ENCODE measurements at regions of chr12 and their contacts with region 1.

Region 1: DNA sequence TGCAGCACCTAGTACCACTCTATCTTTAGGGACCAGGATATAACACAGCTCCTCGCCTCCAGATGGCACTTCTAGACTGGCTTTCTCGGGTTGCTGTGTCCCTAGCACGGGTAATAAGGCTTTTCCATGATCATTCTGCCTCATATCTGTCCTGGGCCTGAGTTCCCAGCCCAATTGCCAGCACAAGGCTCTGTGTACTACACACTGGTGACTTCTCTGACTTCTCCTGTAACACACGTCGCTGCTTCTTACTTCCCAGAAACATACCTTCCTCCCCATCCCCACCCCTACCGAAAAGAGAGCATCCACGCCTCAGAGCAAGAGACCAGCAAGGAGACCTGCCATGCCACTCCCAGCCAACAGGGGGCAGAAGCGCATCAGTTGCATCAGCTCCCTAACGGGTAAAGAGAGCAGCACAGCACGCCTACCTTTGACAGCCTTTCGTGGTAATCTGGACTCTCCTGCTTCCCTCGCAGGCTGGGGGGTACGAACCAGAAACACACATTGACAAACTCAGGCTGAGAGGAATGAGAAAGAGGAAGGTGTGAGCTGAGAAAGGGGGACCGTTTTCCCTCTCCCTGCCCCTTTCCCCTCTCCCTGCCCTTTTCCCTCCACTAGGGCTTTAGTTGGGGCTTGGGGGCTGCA is 21.2 kb upstream of the ZNF740 start:
- DNase-seq: peak; percentile 94
- CTCF ChIP-seq: peak; percentile 100

Region 2: DNA sequence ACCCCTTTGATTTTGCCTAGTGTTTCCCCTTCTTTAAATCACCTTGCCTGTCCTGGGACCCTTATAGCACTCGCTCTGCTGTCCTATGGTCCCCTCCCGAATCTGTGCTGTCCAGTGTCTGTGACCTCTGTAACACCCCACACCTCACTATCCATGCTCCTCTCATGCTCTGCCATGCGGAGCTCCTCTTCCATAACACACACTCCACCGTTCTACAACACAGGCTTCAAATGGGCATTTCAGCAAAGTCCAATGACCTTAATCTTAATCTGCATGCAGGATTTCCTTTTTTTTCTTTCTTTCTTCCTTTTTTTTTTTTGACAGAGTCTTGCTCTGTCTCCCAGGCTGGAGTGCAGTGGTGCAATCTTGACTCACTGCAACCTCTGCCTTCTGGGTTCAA is 30.1 kb before region 1 on chr12:
- CTCF ChIA-PET with region 1: interaction called, 17 read pairs
- POLR2A ChIA-PET with region 1: no interaction called
- DNase-seq: no peak
- CTCF ChIP-seq: no peak

Region 3: GRCh38 chr12:53180220-53180930 is 21.1 kb after region 1 on chr12 and contains the starts of genes CSAD and ZNF740:
- CTCF ChIA-PET with region 1: interaction called, 147 read pairs
- POLR2A ChIA-PET with region 1: no interaction called
- DNase-seq: peak; percentile 99
- CTCF ChIP-seq: no peak

Region 4: DNA sequence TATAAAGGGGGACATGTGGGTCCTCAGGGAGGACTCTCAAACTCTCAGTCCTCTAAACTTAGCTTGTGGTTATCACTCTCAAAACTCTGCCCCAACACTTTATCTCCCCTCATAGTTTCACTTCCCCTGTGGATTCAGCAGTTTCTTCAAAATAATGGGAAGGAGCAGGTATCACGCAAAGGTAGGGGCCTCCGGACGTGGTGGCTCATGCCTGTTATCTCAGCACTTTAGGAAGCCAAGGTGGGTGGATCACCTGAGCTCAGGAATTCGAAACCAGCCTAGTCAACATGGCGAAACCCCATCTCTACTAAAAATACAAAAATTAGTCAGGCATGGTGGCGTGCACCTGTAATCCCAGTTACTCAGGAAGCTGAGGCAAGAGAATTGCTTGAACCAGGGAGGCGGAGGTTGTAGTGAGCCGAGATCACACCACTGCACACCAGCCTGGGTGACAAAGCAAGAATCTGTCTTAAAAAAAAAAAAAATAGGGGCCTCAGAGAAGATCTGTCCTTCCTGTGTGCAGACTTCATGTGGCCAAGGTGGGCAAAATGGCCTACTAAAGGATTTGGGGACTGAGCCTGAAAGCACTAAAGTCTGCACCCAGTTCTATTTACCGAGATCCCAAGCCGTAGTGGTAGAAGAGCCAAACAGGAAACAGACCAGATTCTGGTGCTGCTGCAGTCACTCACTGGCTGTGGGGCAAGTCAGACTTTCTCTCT is 41.3 kb after region 1 on chr12:
- CTCF ChIA-PET with region 1: interaction called, 35 read pairs
- POLR2A ChIA-PET with region 1: no interaction called
- DNase-seq: peak; percentile 52
- CTCF ChIP-seq: no peak

Region 5: DNA sequence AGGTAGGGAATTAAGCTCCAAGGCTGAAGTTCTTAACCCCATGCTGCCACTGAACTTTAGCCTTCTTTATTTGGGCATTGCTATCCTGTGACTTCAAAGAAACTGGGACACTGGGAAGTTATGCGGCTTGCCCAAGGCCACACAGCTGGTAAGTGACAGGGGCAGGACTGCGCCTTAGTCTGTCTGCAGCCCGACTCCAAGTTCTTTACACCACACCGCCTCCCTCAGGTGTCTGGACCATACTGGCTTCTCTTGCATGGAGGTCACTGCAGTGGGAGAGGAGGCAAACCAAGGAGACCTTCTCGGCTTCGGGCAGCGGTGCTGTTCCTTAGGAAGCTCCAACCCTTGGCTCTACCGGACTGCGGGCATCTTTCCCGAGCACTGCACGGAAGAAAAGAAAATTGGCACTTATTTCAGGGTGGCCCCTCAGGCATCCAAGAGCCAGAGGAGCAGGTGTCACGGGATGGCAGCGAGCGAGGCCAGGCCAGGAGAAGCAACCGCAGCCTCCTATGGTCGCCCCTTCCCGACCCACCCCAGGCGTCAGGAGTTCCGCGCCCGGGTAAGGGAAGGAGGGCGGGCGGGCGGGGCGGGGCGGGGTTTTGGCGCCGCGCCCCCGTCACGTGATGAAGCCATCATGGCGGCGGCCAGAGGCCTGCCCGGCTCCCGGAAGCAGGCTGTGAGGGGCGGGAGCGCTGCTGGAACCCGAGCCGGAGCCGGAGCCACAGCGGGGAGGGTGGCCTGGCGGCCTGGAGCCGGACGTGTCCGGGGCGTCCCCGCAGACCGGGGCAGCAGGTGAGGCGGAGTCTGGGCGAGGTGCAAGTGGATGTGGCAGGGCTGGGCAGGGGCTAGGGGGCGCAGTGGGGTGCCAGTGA is 92.4 kb after region 1 on chr12:
- CTCF ChIA-PET with region 1: interaction called, 10 read pairs
- POLR2A ChIA-PET with region 1: no interaction called
- DNase-seq: peak; percentile 93
- CTCF ChIP-seq: peak; percentile 67

Region 6: DNA sequence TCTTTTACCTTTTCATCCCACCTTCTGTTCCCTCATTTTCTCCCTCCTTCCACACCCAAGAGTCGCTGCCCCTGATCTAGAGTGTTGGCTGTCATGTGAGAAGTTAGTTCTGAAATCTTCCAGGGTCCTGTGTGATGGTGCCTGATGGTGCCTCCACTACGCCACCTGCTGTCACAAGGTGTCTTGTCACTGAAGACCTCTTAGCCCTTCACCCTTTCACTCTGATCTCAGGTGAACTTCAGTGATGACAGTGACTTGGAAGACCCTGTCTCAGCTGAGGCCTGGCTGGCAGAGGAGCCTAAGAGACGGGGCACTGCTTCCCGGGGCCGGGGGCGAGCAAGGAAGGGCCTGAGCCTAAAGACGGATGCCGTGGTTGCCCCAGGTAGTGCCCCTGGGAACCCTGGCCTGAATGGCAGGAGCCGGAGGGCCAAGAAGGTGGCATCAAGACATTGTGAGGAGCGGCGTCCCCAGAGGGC is 128.5 kb after region 1 on chr12:
- CTCF ChIA-PET with region 1: interaction called, 59 read pairs
- POLR2A ChIA-PET with region 1: no interaction called
- DNase-seq: peak; percentile 80
- CTCF ChIP-seq: peak; percentile 68

Region 7: DNA sequence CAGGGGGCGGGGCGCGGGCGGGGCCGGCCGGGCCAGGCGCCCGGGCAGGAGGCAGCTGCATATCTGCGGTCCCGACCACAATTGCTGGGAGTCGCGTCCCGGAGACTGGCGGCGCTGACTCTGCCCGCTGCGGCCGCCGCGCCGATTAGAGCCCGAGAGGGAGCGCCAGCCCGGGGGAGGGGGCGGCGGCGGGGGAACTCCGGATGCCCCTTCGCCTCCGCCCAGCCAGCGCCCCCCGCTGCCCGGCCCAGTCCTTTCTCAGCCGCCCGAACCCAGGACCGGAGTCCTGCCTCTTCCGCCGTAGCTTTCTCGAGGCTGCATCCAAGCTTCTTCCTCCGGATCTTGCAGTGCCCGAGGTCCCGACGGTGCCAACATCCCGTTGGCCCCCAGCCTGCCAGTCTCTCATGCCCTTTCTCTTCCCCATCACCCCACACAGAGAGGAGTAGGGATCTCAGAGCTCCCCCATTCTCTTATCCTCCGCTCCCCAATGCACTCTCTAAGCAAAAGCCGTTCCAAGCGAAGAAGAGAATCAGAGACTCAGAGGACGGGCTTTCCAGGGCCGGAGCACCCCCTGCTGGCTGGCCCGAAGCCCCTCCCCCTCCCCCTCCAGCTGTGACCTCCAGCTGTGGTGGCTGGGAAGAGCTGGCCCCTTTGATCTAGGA is 185.6 kb after region 1 on chr12:
- CTCF ChIA-PET with region 1: interaction called, 16 read pairs
- POLR2A ChIA-PET with region 1: no interaction called
- DNase-seq: peak; percentile 84
- CTCF ChIP-seq: peak; percentile 76

Region 8: GRCh38 chr12:53585448-53586125 is 426.3 kb after region 1 on chr12:
- CTCF ChIA-PET with region 1: no interaction called
- POLR2A ChIA-PET with region 1: no interaction called
- DNase-seq: peak; percentile 42
- CTCF ChIP-seq: no peak